T-cell (primary cell): ENCODE measurements at regions of chr1 and their contacts with region 1.

Region 1: DNA sequence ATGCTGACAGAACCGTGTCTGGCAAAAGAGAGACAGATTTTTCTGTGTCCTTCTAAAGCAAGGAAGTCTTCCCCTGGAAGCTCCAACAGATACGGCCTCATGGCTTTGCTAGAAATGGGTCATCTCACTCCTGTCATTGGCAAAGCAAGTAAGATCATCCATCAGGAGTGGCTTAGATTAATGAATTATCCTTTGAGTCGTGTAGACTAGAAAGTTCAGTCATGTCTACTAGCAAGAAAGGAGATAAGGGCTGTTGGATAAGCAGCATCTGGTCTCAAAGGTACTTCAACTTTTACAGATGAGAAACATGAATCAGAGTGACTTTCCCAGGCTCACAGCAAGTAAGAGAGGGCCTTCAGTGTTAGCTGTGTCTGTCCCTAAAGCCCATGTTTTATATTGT is 3.4 kb upstream of the AGO3 start:
- DNase-seq: no peak
- ATAC-seq: no peak
- H3K4me3 ChIP-seq: no peak overlapping the region
- H3K4me3 Mint-ChIP-seq: no peak overlapping the region
- H3K27ac ChIP-seq: no peak overlapping the region
- H3K27ac Mint-ChIP-seq: no peak overlapping the region
- H3K4me1 ChIP-seq: peaks cover 11 to 13% of the 10 kb centered on the region in 2 experiments
- H3K4me1 Mint-ChIP-seq: peaks cover 11 to 16% (median 13%) of the 10 kb centered on the region in 3 donors
- H3K27me3 ChIP-seq: no peaks in the 10 kb centered on the region
- H3K27me3 Mint-ChIP-seq: no peaks in the 10 kb centered on the region

Region 2: GRCh38 chr1:35797380-35797779 is 130.1 kb before region 1 on chr1:
- CTCF ChIA-PET with region 1: interaction called in 1 of 2 experiments, 10 read pairs
- POLR2A ChIA-PET with region 1: no interaction called
- DNase-seq: no peak
- ATAC-seq: no peak
- H3K4me3 ChIP-seq: no peak overlapping the region
- H3K4me3 Mint-ChIP-seq: no peak overlapping the region
- H3K27ac ChIP-seq: no peak overlapping the region
- H3K27ac Mint-ChIP-seq: no peak overlapping the region
- H3K4me1 ChIP-seq: no peaks in the 10 kb centered on the region
- H3K4me1 Mint-ChIP-seq: peaks cover 0 to 6% (median 0%) of the 10 kb centered on the region in 3 donors
- H3K27me3 ChIP-seq: peaks cover 0 to 3% of the 10 kb centered on the region in 2 experiments
- H3K27me3 Mint-ChIP-seq: no peaks in the 10 kb centered on the region